HCT116 (cell line): ENCODE measurements at regions of chr9 and their contacts with region 1.

Region 1: GRCh38 chr9:129597355-129598088 is 23.4 kb downstream of the C9orf50 start:
- DNase-seq: peak; percentile 86
- ATAC-seq: peak; percentile 65
- H3K4me3 ChIP-seq: peak overlapping the region; percentile 57 to 67
- H3K27ac ChIP-seq: peak overlapping the region; percentile 98
- H3K4me1 ChIP-seq: peaks cover 82 to 95% of the 10 kb centered on the region in 2 experiments
- H3K27me3 ChIP-seq: no peaks in the 10 kb centered on the region
- CTCF ChIP-seq: no peak
- POLR2A ChIP-seq: no peak
- RAD21 ChIP-seq: no peak

Region 2: DNA sequence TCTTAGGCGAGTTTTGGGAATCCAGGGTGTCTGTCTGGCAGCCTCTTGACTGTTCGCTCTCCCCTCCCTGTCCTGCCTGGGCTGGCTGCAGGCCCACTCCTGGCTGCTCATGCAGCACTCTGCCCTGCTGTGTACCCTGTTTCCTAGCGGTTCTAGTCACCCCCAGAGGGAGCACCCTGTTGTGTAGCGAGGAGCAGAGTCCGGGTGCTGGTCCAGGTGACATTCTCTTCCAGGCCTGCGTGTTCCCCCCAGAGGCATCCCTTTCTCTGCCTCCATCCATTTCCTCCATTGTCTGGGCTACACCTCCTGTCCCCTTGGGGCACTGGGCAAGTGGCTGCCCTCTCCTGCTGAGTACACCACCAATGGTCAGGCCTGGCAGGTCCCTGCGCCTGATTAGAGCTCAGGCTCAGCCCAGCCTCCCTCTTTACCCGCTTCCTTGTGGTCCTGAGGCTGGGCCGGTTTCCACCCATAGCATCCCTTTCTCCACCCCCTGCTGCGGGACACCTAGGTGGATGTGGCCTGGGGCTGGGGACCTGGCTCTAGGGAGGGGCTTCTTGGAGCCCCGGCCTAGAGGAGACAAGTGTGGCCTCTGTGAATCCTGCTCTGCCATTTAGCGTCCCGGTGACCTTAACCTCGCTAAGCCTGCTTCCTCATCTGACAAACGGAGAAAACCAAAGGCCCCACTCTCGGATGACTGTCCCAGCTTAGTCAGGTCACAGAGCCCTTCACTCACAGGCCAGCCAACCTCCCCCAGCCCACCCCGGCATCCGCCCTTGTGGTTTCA is 503.9 kb before region 1 on chr9:
- CTCF ChIA-PET with region 1: no interaction called
- POLR2A ChIA-PET with region 1: no interaction called
- RAD21 ChIA-PET with region 1: no interaction called
- intact Hi-C with region 1: no loop called
- DNase-seq: no peak
- ATAC-seq: peak; percentile 16
- H3K4me3 ChIP-seq: no peak overlapping the region
- H3K27ac ChIP-seq: no peak overlapping the region
- H3K4me1 ChIP-seq: no peaks in the 10 kb centered on the region
- H3K27me3 ChIP-seq: no peaks in the 10 kb centered on the region
- CTCF ChIP-seq: no peak
- POLR2A ChIP-seq: no peak
- RAD21 ChIP-seq: no peak

Region 3: GRCh38 chr9:129352146-129352865 is 245.2 kb before region 1 on chr9:
- CTCF ChIA-PET with region 1: no interaction called
- POLR2A ChIA-PET with region 1: no interaction called
- RAD21 ChIA-PET with region 1: no interaction called
- intact Hi-C with region 1: no loop called
- DNase-seq: no peak
- ATAC-seq: no peak
- H3K4me3 ChIP-seq: no peak overlapping the region
- H3K27ac ChIP-seq: peak overlapping the region; percentile 33; the same call in 1 of the 2 replicates
- H3K4me1 ChIP-seq: peaks cover 14 to 46% of the 10 kb centered on the region in 2 experiments; a peak in 3 of 4 replicates
- H3K27me3 ChIP-seq: no peaks in the 10 kb centered on the region
- CTCF ChIP-seq: no peak
- POLR2A ChIP-seq: no peak
- RAD21 ChIP-seq: no peak

Region 4: DNA sequence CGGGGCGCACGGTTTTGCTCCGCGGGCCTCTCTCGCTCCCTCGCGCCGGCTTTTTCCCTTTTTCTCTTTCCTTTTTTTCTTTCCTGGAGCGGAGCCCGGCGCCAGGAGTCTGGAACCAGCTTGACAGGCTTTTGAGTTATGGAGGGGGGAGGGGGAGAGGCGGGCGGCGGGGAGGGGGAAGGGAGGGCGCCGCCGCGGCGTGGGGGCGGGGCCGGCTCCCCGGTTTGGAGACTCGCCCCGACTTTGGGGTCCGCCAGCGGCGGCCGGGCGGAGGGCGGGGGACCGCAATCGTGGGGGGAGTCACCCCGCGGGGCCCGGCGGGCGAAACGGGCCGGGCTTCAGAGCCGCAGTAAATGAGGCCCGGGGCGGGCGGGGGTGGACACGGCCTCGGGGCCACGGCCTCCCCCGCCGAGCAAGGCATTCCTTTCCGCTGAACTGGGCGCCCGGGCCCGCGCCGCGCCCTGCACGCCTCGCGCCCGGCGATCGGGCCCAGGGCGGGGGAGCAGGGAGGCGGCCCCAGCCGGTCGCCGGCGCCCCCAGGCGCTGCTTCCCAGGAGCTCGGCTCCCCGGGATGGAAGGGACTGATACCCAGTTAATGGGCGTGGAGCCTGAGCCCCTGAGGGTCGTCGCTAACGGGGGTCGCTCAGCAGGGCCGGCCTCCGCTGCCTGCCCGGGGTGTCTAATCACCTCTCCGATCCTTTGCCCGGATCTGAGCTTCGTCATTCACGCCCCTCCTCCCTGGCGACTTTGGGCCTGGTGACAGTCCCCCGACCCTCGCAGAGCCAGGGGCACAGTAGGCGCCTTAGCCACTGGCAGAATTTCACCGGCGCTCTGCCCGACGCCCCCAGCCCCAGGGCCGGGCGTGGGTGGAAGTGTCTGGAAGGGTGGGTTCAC is 114.8 kb before region 1 on chr9:
- CTCF ChIA-PET with region 1: no interaction called
- POLR2A ChIA-PET with region 1: interaction called, 11 read pairs
- RAD21 ChIA-PET with region 1: no interaction called
- intact Hi-C with region 1: no loop called
- DNase-seq: no peak
- ATAC-seq: peak; percentile 69
- H3K4me3 ChIP-seq: peak overlapping the region; percentile 44 to 56
- H3K27ac ChIP-seq: peak overlapping the region; percentile 100
- H3K4me1 ChIP-seq: peaks cover 92 to 99% of the 10 kb centered on the region in 2 experiments
- H3K27me3 ChIP-seq: no peaks in the 10 kb centered on the region
- CTCF ChIP-seq: no peak
- POLR2A ChIP-seq: no peak
- RAD21 ChIP-seq: no peak

Region 5: DNA sequence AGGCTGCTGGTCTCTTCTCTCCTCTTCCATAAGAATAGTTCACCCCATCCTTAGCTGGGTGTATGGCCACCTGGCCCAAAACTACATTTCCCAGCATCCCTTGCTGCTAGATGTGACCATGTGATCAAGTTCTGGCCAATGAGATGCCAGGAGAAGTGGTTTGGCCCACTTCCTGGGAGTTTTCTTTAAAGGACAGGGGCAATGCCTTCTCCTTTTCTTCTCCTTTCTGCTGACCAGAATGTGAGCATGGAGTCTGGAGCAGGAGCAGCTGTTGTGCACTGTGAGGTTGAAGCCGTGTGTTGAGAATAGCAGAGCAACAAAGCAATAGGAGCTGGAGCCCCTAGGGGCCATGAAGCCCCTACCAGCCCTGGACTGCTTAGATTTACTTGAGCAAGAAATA is 13.4 kb before region 1 on chr9:
- CTCF ChIA-PET with region 1: interaction called, 3 read pairs
- POLR2A ChIA-PET with region 1: interaction called, 46 read pairs
- RAD21 ChIA-PET with region 1: interaction called, 5 to 6 read pairs
- intact Hi-C with region 1: loop called (anchors 1 kb)
- DNase-seq: peak; percentile 85
- ATAC-seq: peak; percentile 68
- H3K4me3 ChIP-seq: no peak overlapping the region
- H3K27ac ChIP-seq: peak overlapping the region; percentile 51
- H3K4me1 ChIP-seq: peaks cover 33 to 47% of the 10 kb centered on the region in 2 experiments
- H3K27me3 ChIP-seq: no peaks in the 10 kb centered on the region
- CTCF ChIP-seq: no peak
- POLR2A ChIP-seq: no peak
- RAD21 ChIP-seq: no peak

Region 6: DNA sequence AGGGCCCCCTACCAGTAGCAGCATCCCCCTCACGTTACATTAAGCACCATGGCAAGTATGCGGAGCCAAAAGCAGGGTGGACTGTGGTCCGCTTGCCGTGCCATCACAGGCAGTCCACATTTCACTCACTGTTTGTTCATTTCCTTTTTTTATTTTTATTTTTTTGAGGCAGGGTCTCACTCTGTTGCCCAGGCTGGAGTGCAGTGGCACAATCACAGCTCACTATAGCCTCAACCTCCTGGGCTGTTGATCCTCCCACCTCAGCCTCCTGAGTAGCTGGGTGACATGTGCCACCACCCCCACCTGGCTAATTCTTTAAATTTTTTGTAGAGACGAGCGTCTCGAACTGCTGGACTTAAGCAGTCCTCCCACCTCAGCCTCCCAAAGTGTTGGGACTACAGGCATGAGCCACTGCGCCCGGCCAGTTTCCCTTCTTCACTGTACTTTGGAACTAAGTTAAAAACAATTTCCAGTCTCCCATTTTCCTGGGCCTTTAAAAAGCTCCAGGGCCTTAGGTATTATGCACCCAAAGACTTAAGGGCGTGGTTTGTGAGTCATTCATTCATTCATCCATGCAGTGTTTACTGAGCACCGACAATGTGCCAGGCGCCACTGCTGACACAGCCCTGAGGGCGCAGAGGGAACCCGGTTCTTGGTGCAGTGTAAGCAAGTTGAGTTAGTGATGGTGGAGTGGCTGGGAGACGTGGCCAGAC is 87.9 kb after region 1 on chr9:
- CTCF ChIA-PET with region 1: no interaction called
- POLR2A ChIA-PET with region 1: no interaction called
- RAD21 ChIA-PET with region 1: no interaction called
- intact Hi-C with region 1: no loop called
- DNase-seq: peak; percentile 68
- ATAC-seq: peak; percentile 80
- H3K4me3 ChIP-seq: peak overlapping the region; percentile 22 to 35
- H3K27ac ChIP-seq: peak overlapping the region; percentile 36; the same call in 1 of the 2 replicates
- H3K4me1 ChIP-seq: peaks cover 18 to 53% of the 10 kb centered on the region in 2 experiments
- H3K27me3 ChIP-seq: no peaks in the 10 kb centered on the region
- CTCF ChIP-seq: no peak
- POLR2A ChIP-seq: peak; percentile 13
- RAD21 ChIP-seq: no peak

Region 7: GRCh38 chr9:129823935-129824601 is 226.5 kb after region 1 on chr9 and contains the start of gene TOR1A:
- CTCF ChIA-PET with region 1: no interaction called
- POLR2A ChIA-PET with region 1: no interaction called
- RAD21 ChIA-PET with region 1: no interaction called
- intact Hi-C with region 1: no loop called
- DNase-seq: peak; percentile 94
- ATAC-seq: peak; percentile 88
- H3K4me3 ChIP-seq: peak within 1 kb of the TSS; percentile 78 to 88
- H3K27ac ChIP-seq: peak within 1 kb of the TSS; percentile 83; the same call in 1 of the 2 replicates
- H3K4me1 ChIP-seq: peaks cover 0 to 7% of the 10 kb centered on the region in 2 experiments; a peak in 2 of 4 replicates
- H3K27me3 ChIP-seq: no peaks in the 10 kb centered on the region
- CTCF ChIP-seq: no peak
- POLR2A ChIP-seq: peak; percentile 84
- RAD21 ChIP-seq: no peak
- total RNA-seq, gene TOR1A: 24.4 TPM